ENCODE measurements at regions of chr1 and their contacts with region 1.

Region 1: GRCh38 chr1:185338719-185339622 is 21.9 kb upstream of the IVNS1ABP start:
- H3K4me3 Mint-ChIP-seq: peak overlapping the region; percentile 44
- H3K27ac Mint-ChIP-seq: peak overlapping the region; percentile 99
- H3K4me1 Mint-ChIP-seq: peaks cover 61% of the 10 kb centered on the region
- H3K27me3 Mint-ChIP-seq: no peaks in the 10 kb centered on the region

Region 2: GRCh38 chr1:185373813-185374529 is 35.0 kb after region 1 on chr1:
- intact Hi-C with region 1: loop called (anchors 5 kb)
- H3K4me3 Mint-ChIP-seq: no peak overlapping the region
- H3K27ac Mint-ChIP-seq: peak overlapping the region; percentile 86
- H3K4me1 Mint-ChIP-seq: peaks cover 25% of the 10 kb centered on the region
- H3K27me3 Mint-ChIP-seq: no peaks in the 10 kb centered on the region